ENCODE measurements at regions of chr9 and their contacts with region 1.

Region 1: GRCh38 chr9:82532504-82533180 is 530.3 kb downstream of the RASEF start:
- DNase-seq: peak; percentile 7
- H3K4me3 ChIP-seq: no peak overlapping the region
- H3K27ac ChIP-seq: no peak overlapping the region
- H3K4me1 ChIP-seq: no peaks in the 10 kb centered on the region
- H3K27me3 ChIP-seq: no peaks in the 10 kb centered on the region
- CTCF ChIP-seq: peak; percentile 41; the same call in 1 of the 2 replicates

Region 2: DNA sequence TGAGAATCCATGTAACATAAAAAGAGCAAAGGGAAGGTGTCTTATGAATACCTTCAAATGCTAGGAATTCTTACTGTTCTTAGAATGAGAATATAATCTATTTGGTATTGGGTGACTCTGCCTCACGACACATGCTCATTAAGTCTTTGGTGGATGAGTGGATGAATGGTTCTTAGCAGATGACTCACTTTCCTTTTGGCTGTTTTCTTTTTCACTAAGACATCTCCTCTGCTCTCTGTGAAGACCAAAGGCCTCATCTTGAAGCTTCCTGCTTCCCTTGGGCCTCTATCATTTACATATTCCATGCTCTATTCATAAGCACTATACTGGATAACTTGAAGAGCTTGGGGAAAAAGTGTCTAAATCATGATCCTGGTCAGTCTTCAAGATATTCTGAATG is 76.0 kb before region 1 on chr9:
- CTCF ChIA-PET with region 1: no interaction called
- POLR2A ChIA-PET with region 1: no interaction called
- intact Hi-C with region 1: no loop called
- DNase-seq: peak; percentile 2
- H3K4me3 ChIP-seq: no peak overlapping the region
- H3K27ac ChIP-seq: no peak overlapping the region
- H3K4me1 ChIP-seq: no peaks in the 10 kb centered on the region
- H3K27me3 ChIP-seq: no peaks in the 10 kb centered on the region
- CTCF ChIP-seq: no peak

Region 3: GRCh38 chr9:82805027-82805426 is 272.4 kb after region 1 on chr9:
- CTCF ChIA-PET with region 1: no interaction called
- POLR2A ChIA-PET with region 1: no interaction called
- intact Hi-C with region 1: loop called (anchors 10 kb)
- DNase-seq: no peak
- H3K4me3 ChIP-seq: no peak overlapping the region
- H3K27ac ChIP-seq: no peak overlapping the region
- H3K4me1 ChIP-seq: no peaks in the 10 kb centered on the region
- H3K27me3 ChIP-seq: no peaks in the 10 kb centered on the region
- CTCF ChIP-seq: 0 out of 2 replicates have a peak, but pooled peaks have one; percentile 18